T-cell (primary cell): ENCODE measurements at regions of chr12 and their contacts with region 1.

Region 1: GRCh38 chr12:12442548-12443071 is 85.7 kb downstream of the BORCS5 start:
- DNase-seq: peak in 1 of 35 experiments; percentile 50
- ATAC-seq: peak in 1 of 4 experiments; percentile 1
- H3K4me3 ChIP-seq: no peak overlapping the region
- H3K4me3 Mint-ChIP-seq: peak overlapping the region in 2 of 3 donors; percentile 5 to 63
- H3K27ac ChIP-seq: peak overlapping the region; percentile 96
- H3K27ac Mint-ChIP-seq: peak overlapping the region; percentile 92 to 94
- H3K4me1 ChIP-seq: peaks cover 33 to 70% of the 10 kb centered on the region in 2 experiments
- H3K4me1 Mint-ChIP-seq: peaks cover 57 to 92% (median 89%) of the 10 kb centered on the region in 3 donors
- H3K27me3 ChIP-seq: no peaks in the 10 kb centered on the region
- H3K27me3 Mint-ChIP-seq: no peaks in the 10 kb centered on the region

Region 2: DNA sequence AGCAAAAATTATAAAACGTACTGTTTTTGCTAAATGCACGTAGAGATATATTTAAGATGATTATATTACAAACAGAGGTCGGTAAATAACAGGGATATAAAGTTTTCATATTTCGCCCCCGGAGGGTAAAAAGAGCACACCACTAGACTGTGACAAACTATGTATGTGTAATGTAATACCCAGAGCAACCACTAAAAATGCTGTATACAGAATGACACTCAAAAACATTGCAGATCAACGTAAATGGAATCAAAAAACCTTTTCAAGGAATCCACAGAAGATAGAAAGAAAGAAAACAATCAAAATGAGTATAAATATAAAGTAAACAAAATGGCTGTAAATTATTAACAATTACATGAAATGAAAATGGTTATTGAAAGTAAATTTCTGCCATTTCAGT is 1094.8 kb before region 1 on chr12:
- CTCF ChIA-PET with region 1: no interaction called
- POLR2A ChIA-PET with region 1: no interaction called
- DNase-seq: no peak
- ATAC-seq: no peak
- H3K4me3 ChIP-seq: no peak overlapping the region
- H3K4me3 Mint-ChIP-seq: no peak overlapping the region
- H3K27ac ChIP-seq: no peak overlapping the region
- H3K27ac Mint-ChIP-seq: no peak overlapping the region
- H3K4me1 ChIP-seq: no peaks in the 10 kb centered on the region
- H3K4me1 Mint-ChIP-seq: no peaks in the 10 kb centered on the region
- H3K27me3 ChIP-seq: no peaks in the 10 kb centered on the region
- H3K27me3 Mint-ChIP-seq: no peaks in the 10 kb centered on the region

Region 3: GRCh38 chr12:12456637-12457036 is 14.0 kb after region 1 on chr12:
- CTCF ChIA-PET with region 1: interaction called in 1 of 2 experiments, 3 read pairs
- POLR2A ChIA-PET with region 1: interaction called, 5 to 19 read pairs
- DNase-seq: peak in 1 of 35 experiments; percentile 46
- ATAC-seq: peak; percentile 43 to 73 (median 59)
- H3K4me3 ChIP-seq: no peak overlapping the region
- H3K4me3 Mint-ChIP-seq: peak overlapping the region; percentile 29 to 42 (median 34)
- H3K27ac ChIP-seq: peak overlapping the region; percentile 79
- H3K27ac Mint-ChIP-seq: peak overlapping the region; percentile 92 to 93
- H3K4me1 ChIP-seq: peaks cover 0 to 18% of the 10 kb centered on the region in 2 experiments
- H3K4me1 Mint-ChIP-seq: peaks cover 31 to 47% (median 42%) of the 10 kb centered on the region in 3 donors
- H3K27me3 ChIP-seq: no peaks in the 10 kb centered on the region
- H3K27me3 Mint-ChIP-seq: no peaks in the 10 kb centered on the region

Region 4: GRCh38 chr12:12482959-12483358 is 40.3 kb after region 1 on chr12:
- CTCF ChIA-PET with region 1: interaction called in 1 of 2 experiments, 13 read pairs
- POLR2A ChIA-PET with region 1: interaction called, 3 to 20 read pairs
- DNase-seq: no peak
- ATAC-seq: no peak
- H3K4me3 ChIP-seq: peak overlapping the region in 1 of 2 donors; percentile 45
- H3K4me3 Mint-ChIP-seq: peak overlapping the region; percentile 58 to 84 (median 81)
- H3K27ac ChIP-seq: peak overlapping the region; percentile 97
- H3K27ac Mint-ChIP-seq: peak overlapping the region; percentile 98 to 99
- H3K4me1 ChIP-seq: peaks cover 19 to 23% of the 10 kb centered on the region in 2 experiments
- H3K4me1 Mint-ChIP-seq: peaks cover 37 to 80% (median 79%) of the 10 kb centered on the region in 3 donors
- H3K27me3 ChIP-seq: no peaks in the 10 kb centered on the region
- H3K27me3 Mint-ChIP-seq: no peaks in the 10 kb centered on the region

Region 5: GRCh38 chr12:12546314-12546772 is 103.7 kb after region 1 on chr12:
- CTCF ChIA-PET with region 1: no interaction called
- POLR2A ChIA-PET with region 1: interaction called in 1 of 2 experiments, 15 read pairs
- DNase-seq: no peak
- ATAC-seq: no peak
- H3K4me3 ChIP-seq: no peak overlapping the region
- H3K4me3 Mint-ChIP-seq: no peak overlapping the region
- H3K27ac ChIP-seq: no peak overlapping the region
- H3K27ac Mint-ChIP-seq: no peak overlapping the region
- H3K4me1 ChIP-seq: peaks cover under 1 to 3% of the 10 kb centered on the region in 2 experiments
- H3K4me1 Mint-ChIP-seq: peaks cover 19 to 59% (median 54%) of the 10 kb centered on the region in 3 donors
- H3K27me3 ChIP-seq: no peaks in the 10 kb centered on the region
- H3K27me3 Mint-ChIP-seq: no peaks in the 10 kb centered on the region

Region 6: GRCh38 chr12:12779529-12779928 is 336.9 kb after region 1 on chr12:
- CTCF ChIA-PET with region 1: no interaction called
- POLR2A ChIA-PET with region 1: no interaction called
- DNase-seq: no peak
- ATAC-seq: no peak
- H3K4me3 ChIP-seq: no peak overlapping the region
- H3K4me3 Mint-ChIP-seq: no peak overlapping the region
- H3K27ac ChIP-seq: no peak overlapping the region
- H3K27ac Mint-ChIP-seq: no peak overlapping the region
- H3K4me1 ChIP-seq: no peaks in the 10 kb centered on the region
- H3K4me1 Mint-ChIP-seq: no peaks in the 10 kb centered on the region
- H3K27me3 ChIP-seq: no peaks in the 10 kb centered on the region
- H3K27me3 Mint-ChIP-seq: no peaks in the 10 kb centered on the region